Pancreas (tissue), 10 donors: ENCODE measurements at regions of chr6 and their contacts with region 1.

Region 1: DNA sequence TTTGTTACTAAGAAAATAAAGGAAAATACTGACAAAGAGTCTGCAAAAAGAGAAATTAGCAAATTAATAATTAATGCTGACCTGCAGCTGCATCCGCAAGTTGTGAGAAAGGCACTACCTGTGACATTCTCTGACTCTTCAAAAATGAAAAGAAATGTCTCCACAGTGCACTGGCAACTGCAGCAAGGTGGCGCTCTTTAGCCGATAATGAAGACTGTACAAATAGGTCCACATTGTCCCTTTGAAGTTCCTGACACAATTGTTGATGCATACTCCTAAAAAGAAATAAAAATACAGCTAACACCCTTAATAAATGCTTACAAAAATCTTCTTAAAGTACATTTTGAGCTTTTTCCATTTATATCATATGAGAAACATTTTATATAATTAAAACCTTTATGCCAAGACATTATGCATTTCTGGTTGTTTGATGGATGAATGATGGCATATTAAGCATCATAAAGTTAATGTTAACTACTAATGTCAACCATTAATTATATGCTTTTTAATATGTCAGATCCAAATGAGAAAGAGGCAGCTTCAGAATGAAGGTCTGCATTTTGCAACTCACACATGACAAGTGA is 96.5 kb downstream of the MMS22L start:
- DNase-seq: peak in 5 of 6 donors; percentile 34 to 68 (median 52)
- ATAC-seq: peak; percentile 78 to 88 (median 86)
- H3K4me3 ChIP-seq: no peak overlapping the region
- H3K27ac ChIP-seq: no peak overlapping the region
- H3K4me1 ChIP-seq: no peaks in the 10 kb centered on the region
- H3K27me3 ChIP-seq: no peaks in the 10 kb centered on the region
- CTCF ChIP-seq: peak; percentile 34 to 78 (median 70)

Region 2: DNA sequence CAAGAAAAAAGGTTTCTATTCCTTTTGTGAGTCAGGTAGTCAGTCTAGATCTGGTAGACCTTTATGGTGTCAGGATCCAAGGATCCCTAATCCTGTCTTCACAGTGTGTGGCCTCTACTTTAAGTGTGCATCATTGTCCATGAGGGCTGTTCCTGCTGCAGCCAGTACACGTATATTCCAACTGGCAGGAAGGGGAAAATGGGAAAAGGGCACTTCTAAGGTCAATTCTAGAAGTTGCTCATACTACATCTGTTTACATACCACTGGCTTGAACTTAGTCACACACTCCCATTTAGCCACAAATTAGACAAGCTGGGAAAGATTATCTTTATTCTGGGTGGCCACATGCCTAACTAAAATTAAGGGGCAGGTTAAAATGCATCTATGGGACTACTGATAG is 106.2 kb after region 1 on chr6:
- intact Hi-C with region 1: no loop called
- DNase-seq: no peak
- ATAC-seq: no peak
- H3K4me3 ChIP-seq: no peak overlapping the region
- H3K27ac ChIP-seq: no peak overlapping the region
- H3K4me1 ChIP-seq: no peaks in the 10 kb centered on the region
- H3K27me3 ChIP-seq: no peaks in the 10 kb centered on the region
- CTCF ChIP-seq: no peak

Region 3: GRCh38 chr6:97394160-97394748 is 207.7 kb after region 1 on chr6:
- intact Hi-C with region 1: loop called in 2 of 3 experiments (anchors 5 to 10 kb)
- DNase-seq: peak in 3 of 6 donors; percentile 7 to 44 (median 40)
- ATAC-seq: peak; percentile 61 to 95 (median 86)
- H3K4me3 ChIP-seq: no peak overlapping the region
- H3K27ac ChIP-seq: no peak overlapping the region
- H3K4me1 ChIP-seq: no peaks in the 10 kb centered on the region
- H3K27me3 ChIP-seq: no peaks in the 10 kb centered on the region
- CTCF ChIP-seq: peak; percentile 76 to 87 (median 78)

Region 4: DNA sequence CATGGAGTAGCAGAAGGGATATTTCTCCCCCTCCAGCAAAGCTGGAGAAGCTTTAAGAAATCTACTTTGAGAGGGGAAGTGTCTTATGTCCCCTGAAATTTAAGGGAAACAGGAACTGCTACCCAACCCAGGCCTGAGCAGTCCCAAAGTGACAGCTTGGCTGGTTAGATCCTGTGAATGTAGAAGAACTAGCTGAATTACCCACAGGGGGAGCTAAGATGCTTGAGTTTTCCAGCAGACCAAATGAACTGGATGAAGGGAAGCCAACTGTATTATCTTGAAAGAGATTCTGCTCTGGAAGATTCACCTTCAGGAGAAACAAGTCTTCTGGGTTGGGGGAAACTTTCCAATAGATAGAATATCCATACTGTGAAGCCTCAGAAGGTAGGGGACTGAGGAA is 399.8 kb after region 1 on chr6:
- intact Hi-C with region 1: no loop called
- DNase-seq: no peak
- ATAC-seq: no peak
- H3K4me3 ChIP-seq: no peak overlapping the region
- H3K27ac ChIP-seq: no peak overlapping the region
- H3K4me1 ChIP-seq: no peaks in the 10 kb centered on the region
- H3K27me3 ChIP-seq: no peaks in the 10 kb centered on the region
- CTCF ChIP-seq: no peak

Region 5: DNA sequence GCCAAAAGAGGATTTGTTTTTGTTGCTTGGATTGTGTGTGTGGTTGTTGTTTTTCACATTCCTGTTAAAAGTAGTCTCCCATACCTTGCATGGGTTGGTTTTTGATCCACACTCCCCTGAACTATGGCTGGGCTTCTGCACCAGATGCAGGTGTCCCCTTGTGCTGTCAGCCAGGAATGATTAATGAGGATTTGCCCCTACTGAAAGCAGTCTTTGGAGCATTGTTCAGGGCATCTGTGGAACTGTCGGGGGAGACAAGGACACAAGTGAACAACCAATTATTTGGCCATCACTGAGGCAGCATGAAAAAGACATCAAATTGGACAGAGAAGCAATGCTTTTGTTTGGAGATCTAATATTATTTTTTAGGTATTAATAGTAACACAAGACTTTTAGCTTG is 469.7 kb after region 1 on chr6:
- intact Hi-C with region 1: no loop called
- DNase-seq: no peak
- ATAC-seq: no peak
- H3K4me3 ChIP-seq: no peak overlapping the region
- H3K27ac ChIP-seq: no peak overlapping the region
- H3K4me1 ChIP-seq: no peaks in the 10 kb centered on the region
- H3K27me3 ChIP-seq: no peaks in the 10 kb centered on the region
- CTCF ChIP-seq: no peak